MCF 10A (cell line): ENCODE measurements at regions of chr2 and their contacts with region 1.

Region 1: GRCh38 chr2:41869542-41870264 is 178.1 kb upstream of the PKDCC start:
- DNase-seq: peak; percentile 66
- H3K4me3 Mint-ChIP-seq: no peak overlapping the region
- H3K27ac Mint-ChIP-seq: no peak overlapping the region
- H3K4me1 Mint-ChIP-seq: no peaks in the 10 kb centered on the region
- H3K27me3 Mint-ChIP-seq: no peaks in the 10 kb centered on the region
- CTCF ChIP-seq: peak; percentile 93

Region 2: GRCh38 chr2:41853427-41854216 is 16.1 kb before region 1 on chr2:
- CTCF ChIA-PET with region 1: interaction called, 151 read pairs
- POLR2A ChIA-PET with region 1: no interaction called
- intact Hi-C with region 1: loop called (anchors 1 kb)
- DNase-seq: peak; percentile 59
- H3K4me3 Mint-ChIP-seq: no peak overlapping the region
- H3K27ac Mint-ChIP-seq: no peak overlapping the region
- H3K4me1 Mint-ChIP-seq: peaks cover 2% of the 10 kb centered on the region
- H3K27me3 Mint-ChIP-seq: peaks cover 15% of the 10 kb centered on the region
- CTCF ChIP-seq: peak; percentile 67

Region 3: DNA sequence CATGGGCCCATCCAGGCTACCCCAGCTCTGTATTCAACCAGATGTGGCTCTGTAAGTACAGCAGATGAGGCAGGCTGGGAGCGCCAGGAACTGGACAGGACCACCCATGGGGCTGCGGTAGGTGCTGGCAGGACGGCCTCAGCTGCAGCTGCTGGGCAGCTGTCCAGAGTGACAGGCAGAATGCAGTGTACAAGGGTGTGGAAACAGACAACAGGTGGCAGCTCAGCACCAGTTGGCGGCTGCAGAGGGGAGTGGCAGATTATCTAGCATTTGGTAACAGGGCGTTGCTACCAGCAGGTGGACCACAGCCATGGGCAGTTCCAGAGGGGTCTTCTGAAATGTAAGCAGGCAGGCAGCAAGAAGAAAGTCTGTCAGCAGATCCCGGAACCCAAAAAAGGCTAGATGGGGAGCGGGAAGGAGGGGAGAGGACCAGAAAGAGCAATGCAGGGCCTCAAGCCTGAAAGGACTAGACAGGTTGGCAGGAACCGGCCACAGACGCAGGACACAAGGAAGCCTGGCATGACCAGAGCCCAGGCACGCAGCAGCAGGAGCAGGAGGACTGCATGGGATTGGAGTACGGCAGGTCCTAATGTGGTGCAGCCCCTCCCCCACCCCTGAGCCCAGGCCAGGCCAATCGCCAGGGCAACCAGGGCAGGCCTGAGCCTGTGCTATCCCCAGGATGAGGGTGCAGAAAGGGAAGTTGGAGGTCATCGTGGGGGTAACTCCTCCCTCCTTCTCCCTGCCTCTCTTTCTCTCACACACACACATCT is 202.8 kb after region 1 on chr2:
- CTCF ChIA-PET with region 1: interaction called, 17 read pairs
- POLR2A ChIA-PET with region 1: no interaction called
- intact Hi-C with region 1: no loop called
- DNase-seq: peak; percentile 54
- H3K4me3 Mint-ChIP-seq: no peak overlapping the region
- H3K27ac Mint-ChIP-seq: no peak overlapping the region
- H3K4me1 Mint-ChIP-seq: peaks cover 12% of the 10 kb centered on the region
- H3K27me3 Mint-ChIP-seq: peaks cover 49% of the 10 kb centered on the region
- CTCF ChIP-seq: no peak

Region 4: GRCh38 chr2:42246562-42246961 is 376.9 kb after region 1 on chr2:
- CTCF ChIA-PET with region 1: interaction called, 38 read pairs
- POLR2A ChIA-PET with region 1: no interaction called
- intact Hi-C with region 1: loop called (anchors 5 kb)
- DNase-seq: no peak
- H3K4me3 Mint-ChIP-seq: no peak overlapping the region
- H3K27ac Mint-ChIP-seq: no peak overlapping the region
- H3K4me1 Mint-ChIP-seq: peaks cover 5% of the 10 kb centered on the region
- H3K27me3 Mint-ChIP-seq: no peaks in the 10 kb centered on the region
- CTCF ChIP-seq: no peak